ENCODE measurements at regions of chr18 and their contacts with region 1.

Region 1: DNA sequence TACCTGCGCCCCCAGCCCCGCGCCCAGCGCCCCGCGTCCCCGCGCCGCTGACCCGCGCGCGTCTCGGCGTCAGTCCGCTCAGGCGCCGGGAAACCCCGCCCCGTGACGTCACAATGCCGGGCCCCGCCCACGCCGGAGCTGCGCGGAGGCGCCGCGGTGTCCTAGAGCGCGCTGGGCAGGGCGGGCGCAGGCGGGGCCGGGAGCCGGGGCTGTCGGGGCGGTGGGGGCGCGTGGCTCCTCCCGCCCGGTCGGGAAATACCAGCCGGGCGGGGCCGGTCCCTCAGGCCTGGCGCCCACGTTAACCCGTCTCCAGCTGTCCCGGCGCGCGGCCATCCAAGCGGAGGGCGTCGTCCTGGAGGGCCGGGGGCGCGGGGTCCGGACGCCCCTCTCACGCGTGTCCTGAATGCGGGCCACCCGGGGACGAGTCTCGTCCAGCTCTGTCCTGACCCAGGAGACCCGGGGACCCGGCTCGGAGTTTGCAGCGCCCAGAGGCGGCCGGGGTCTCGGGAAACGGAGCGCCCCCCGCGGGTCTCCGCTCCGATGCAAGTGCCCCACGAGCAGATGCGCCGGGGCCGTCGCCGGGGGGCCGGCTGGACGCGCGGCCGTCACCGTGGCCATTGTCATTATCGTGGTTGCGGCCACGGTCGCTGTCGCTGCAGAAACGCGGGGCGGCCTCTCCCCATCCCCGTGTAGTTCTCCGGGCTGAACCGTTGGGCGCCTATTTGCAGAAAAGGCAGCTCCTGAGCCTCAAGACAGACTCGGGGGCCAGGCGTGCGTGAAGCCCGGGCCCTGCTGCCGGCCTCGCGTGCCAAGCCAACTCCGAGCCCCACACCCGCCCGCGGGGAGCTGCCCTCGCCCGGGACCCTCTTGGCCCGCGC is at the start of gene SLC66A2:
- DNase-seq: peak; percentile 85
- H3K4me3 Mint-ChIP-seq: peak within 1 kb of the TSS; percentile 82
- H3K27ac Mint-ChIP-seq: peak within 1 kb of the TSS; percentile 65
- H3K4me1 Mint-ChIP-seq: peaks cover 28% of the 10 kb centered on the region
- H3K27me3 Mint-ChIP-seq: no peaks in the 10 kb centered on the region
- total RNA-seq, gene SLC66A2: 48.1 and 49.5 TPM in 2 replicates

Region 2: GRCh38 chr18:79528846-79529245 is 423.0 kb before region 1 on chr18:
- intact Hi-C with region 1: loop called (anchors 10 kb)
- DNase-seq: peak; percentile 57
- H3K4me3 Mint-ChIP-seq: no peak overlapping the region
- H3K27ac Mint-ChIP-seq: no peak overlapping the region
- H3K4me1 Mint-ChIP-seq: peaks cover 19% of the 10 kb centered on the region
- H3K27me3 Mint-ChIP-seq: no peaks in the 10 kb centered on the region

Region 3: GRCh38 chr18:79964330-79965118 is 12.7 kb after region 1 on chr18 and contains the start of gene HSBP1L1:
- intact Hi-C with region 1: loop called (anchors 1 kb)
- DNase-seq: peak; percentile 65
- H3K4me3 Mint-ChIP-seq: peak within 1 kb of the TSS; percentile 76
- H3K27ac Mint-ChIP-seq: peak within 1 kb of the TSS; percentile 75
- H3K4me1 Mint-ChIP-seq: peaks cover 40% of the 10 kb centered on the region
- H3K27me3 Mint-ChIP-seq: no peaks in the 10 kb centered on the region
- total RNA-seq, gene HSBP1L1: 12.0 and 15.5 TPM in 2 replicates

Region 4: GRCh38 chr18:79988451-79989194 is 36.8 kb after region 1 on chr18 and contains the start of gene TXNL4A:
- intact Hi-C with region 1: loop called (anchors 2 kb)
- DNase-seq: peak; percentile 80
- H3K4me3 Mint-ChIP-seq: peak within 1 kb of the TSS; percentile 96
- H3K27ac Mint-ChIP-seq: peak within 1 kb of the TSS; percentile 95
- H3K4me1 Mint-ChIP-seq: peaks cover 28% of the 10 kb centered on the region
- H3K27me3 Mint-ChIP-seq: no peaks in the 10 kb centered on the region
- total RNA-seq, gene TXNL4A: 181 and 194 TPM in 2 replicates

Region 5: DNA sequence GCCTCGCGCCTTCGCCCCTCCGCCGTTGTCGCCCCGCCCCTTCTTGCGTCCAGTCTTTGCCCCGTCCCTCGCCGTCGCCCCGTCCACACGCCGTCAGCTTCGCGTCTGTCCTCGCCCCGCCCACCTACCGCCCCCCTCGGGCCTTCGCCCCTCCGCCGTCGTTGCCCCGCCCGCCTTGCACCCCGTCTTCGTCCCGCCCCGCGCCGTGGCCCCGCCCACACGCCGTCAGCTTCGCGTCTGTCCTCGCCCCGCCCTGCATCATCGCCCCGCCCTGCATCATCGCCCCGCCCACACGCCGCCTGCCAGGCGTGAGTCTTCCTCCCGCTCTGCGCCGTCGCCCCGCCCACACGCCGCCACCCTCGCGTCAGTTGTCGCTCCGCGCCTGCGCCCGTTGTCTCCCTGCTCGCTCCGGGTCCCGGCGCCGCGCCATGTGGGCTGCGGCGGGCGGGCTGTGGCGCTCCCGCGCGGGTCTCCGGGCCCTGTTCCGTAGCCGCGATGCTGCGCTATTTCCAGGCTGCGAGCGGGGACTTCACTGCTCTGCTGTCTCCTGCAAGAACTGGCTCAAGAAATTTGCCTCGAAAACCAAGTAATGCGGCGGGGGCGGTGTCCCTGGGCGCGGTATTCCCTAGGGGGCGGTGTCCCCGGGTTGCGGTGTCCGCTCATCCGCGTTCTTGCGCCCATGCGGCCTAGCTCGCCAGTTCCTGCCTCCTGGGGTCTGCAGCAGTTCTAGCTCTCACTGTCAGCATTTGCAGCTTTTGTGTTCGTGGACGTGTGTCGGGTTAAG is 82.4 kb after region 1 on chr18 and contains the start of gene RBFA:
- intact Hi-C with region 1: loop called (anchors 1 kb)
- DNase-seq: peak; percentile 98
- H3K4me3 Mint-ChIP-seq: peak within 1 kb of the TSS; percentile 78
- H3K27ac Mint-ChIP-seq: peak within 1 kb of the TSS; percentile 91
- H3K4me1 Mint-ChIP-seq: peaks cover 28% of the 10 kb centered on the region
- H3K27me3 Mint-ChIP-seq: no peaks in the 10 kb centered on the region
- total RNA-seq, gene RBFA: 48.4 and 49.4 TPM in 2 replicates